CD4-positive, alpha-beta memory T cell (primary cell): ENCODE measurements at regions of chr17 and their contacts with region 1.

Region 1: GRCh38 chr17:35312790-35313711 is 60.4 kb downstream of the SLFN11 start:
- DNase-seq: peak; percentile 89 to 98 (median 90)
- H3K4me3 ChIP-seq: peak overlapping the region; percentile 7 to 60
- H3K4me3 Mint-ChIP-seq: peak overlapping the region; percentile 89 to 98 (median 94)
- H3K27ac ChIP-seq: peak overlapping the region; percentile 60
- H3K27ac Mint-ChIP-seq: peak overlapping the region; percentile 89 to 100 (median 98)
- H3K4me1 ChIP-seq: peaks cover 31% of the 10 kb centered on the region
- H3K4me1 Mint-ChIP-seq: peaks cover 42 to 72% (median 58%) of the 10 kb centered on the region in 4 donors
- H3K27me3 ChIP-seq: no peaks in the 10 kb centered on the region
- H3K27me3 Mint-ChIP-seq: no peaks in the 10 kb centered on the region

Region 2: GRCh38 chr17:35214631-35215273 is 98.3 kb before region 1 on chr17:
- CTCF ChIA-PET with region 1: interaction called, 18 read pairs
- POLR2A ChIA-PET with region 1: interaction called, 30 read pairs
- intact Hi-C with region 1: loop called (anchors 1 kb)
- DNase-seq: peak in 3 of 5 donors; percentile 57 to 65 (median 58)
- H3K4me3 ChIP-seq: peak overlapping the region; percentile 38 to 51
- H3K4me3 Mint-ChIP-seq: peak overlapping the region; percentile 16 to 85 (median 79)
- H3K27ac ChIP-seq: peak overlapping the region; percentile 60
- H3K27ac Mint-ChIP-seq: peak overlapping the region; percentile 87 to 97 (median 94)
- H3K4me1 ChIP-seq: peaks cover 93% of the 10 kb centered on the region
- H3K4me1 Mint-ChIP-seq: peaks cover 70 to 91% (median 79%) of the 10 kb centered on the region in 4 donors
- H3K27me3 ChIP-seq: no peaks in the 10 kb centered on the region
- H3K27me3 Mint-ChIP-seq: no peaks in the 10 kb centered on the region

Region 3: GRCh38 chr17:35229638-35230037 is 83.4 kb before region 1 on chr17:
- CTCF ChIA-PET with region 1: no interaction called
- POLR2A ChIA-PET with region 1: no interaction called
- intact Hi-C with region 1: no loop called
- DNase-seq: no peak
- H3K4me3 ChIP-seq: no peak overlapping the region
- H3K4me3 Mint-ChIP-seq: peak overlapping the region in 1 of 8 donors; percentile 51
- H3K27ac ChIP-seq: no peak overlapping the region
- H3K27ac Mint-ChIP-seq: peak overlapping the region in 1 of 7 donors; percentile 17
- H3K4me1 ChIP-seq: peaks cover 23% of the 10 kb centered on the region
- H3K4me1 Mint-ChIP-seq: peaks cover 25 to 58% (median 40%) of the 10 kb centered on the region in 4 donors
- H3K27me3 ChIP-seq: no peaks in the 10 kb centered on the region
- H3K27me3 Mint-ChIP-seq: no peaks in the 10 kb centered on the region

Region 4: GRCh38 chr17:35299129-35299528 is 13.9 kb before region 1 on chr17:
- CTCF ChIA-PET with region 1: interaction called, 10 read pairs
- POLR2A ChIA-PET with region 1: interaction called, 6 read pairs
- intact Hi-C with region 1: no loop called
- DNase-seq: no peak
- H3K4me3 ChIP-seq: no peak overlapping the region
- H3K4me3 Mint-ChIP-seq: peak overlapping the region in 1 of 8 donors; percentile 10
- H3K27ac ChIP-seq: no peak overlapping the region
- H3K27ac Mint-ChIP-seq: no peak overlapping the region
- H3K4me1 ChIP-seq: no peaks in the 10 kb centered on the region
- H3K4me1 Mint-ChIP-seq: peaks cover 0 to 9% (median 3%) of the 10 kb centered on the region in 4 donors
- H3K27me3 ChIP-seq: no peaks in the 10 kb centered on the region
- H3K27me3 Mint-ChIP-seq: no peaks in the 10 kb centered on the region

Region 5: GRCh38 chr17:35373534-35373983 is 60.5 kb after region 1 on chr17 and contains the start of gene SLFN11:
- CTCF ChIA-PET with region 1: interaction called, 29 read pairs
- POLR2A ChIA-PET with region 1: interaction called, 43 read pairs
- intact Hi-C with region 1: loop called (anchors 1 kb)
- DNase-seq: peak; percentile 83 to 91 (median 83)
- H3K4me3 ChIP-seq: peak within 1 kb of the TSS; percentile 54 to 85
- H3K4me3 Mint-ChIP-seq: peak within 1 kb of the TSS; percentile 96 to 100 (median 99)
- H3K27ac ChIP-seq: peak within 1 kb of the TSS; percentile 98
- H3K27ac Mint-ChIP-seq: peak within 1 kb of the TSS; percentile 99 to 100 (median 100)
- H3K4me1 ChIP-seq: peaks cover 45% of the 10 kb centered on the region
- H3K4me1 Mint-ChIP-seq: peaks cover 32 to 71% (median 50%) of the 10 kb centered on the region in 4 donors
- H3K27me3 ChIP-seq: no peaks in the 10 kb centered on the region
- H3K27me3 Mint-ChIP-seq: no peaks in the 10 kb centered on the region
- total RNA-seq, gene SLFN11: 72.4 to 74.2 TPM

Region 6: GRCh38 chr17:35467824-35468223 is 154.8 kb after region 1 on chr17:
- CTCF ChIA-PET with region 1: interaction called, 13 read pairs
- POLR2A ChIA-PET with region 1: interaction called, 10 read pairs
- intact Hi-C with region 1: no loop called
- DNase-seq: peak in 4 of 5 donors; percentile 28 to 52 (median 40)
- H3K4me3 ChIP-seq: no peak overlapping the region
- H3K4me3 Mint-ChIP-seq: peak overlapping the region in 7 of 8 donors; percentile 17 to 68 (median 57)
- H3K27ac ChIP-seq: no peak overlapping the region
- H3K27ac Mint-ChIP-seq: peak overlapping the region; percentile 65 to 92 (median 86)
- H3K4me1 ChIP-seq: peaks cover 34% of the 10 kb centered on the region
- H3K4me1 Mint-ChIP-seq: peaks cover 40 to 64% (median 50%) of the 10 kb centered on the region in 4 donors
- H3K27me3 ChIP-seq: no peaks in the 10 kb centered on the region
- H3K27me3 Mint-ChIP-seq: no peaks in the 10 kb centered on the region

Region 7: GRCh38 chr17:35540589-35541404 is 227.7 kb after region 1 on chr17:
- CTCF ChIA-PET with region 1: interaction called, 270 read pairs
- POLR2A ChIA-PET with region 1: interaction called, 316 read pairs
- intact Hi-C with region 1: loop called (anchors 1 kb)
- DNase-seq: peak in 4 of 5 donors; percentile 43 to 54 (median 50)
- H3K4me3 ChIP-seq: peak overlapping the region; percentile 60 to 79
- H3K4me3 Mint-ChIP-seq: peak overlapping the region; percentile 87 to 98 (median 92)
- H3K27ac ChIP-seq: peak overlapping the region; percentile 74
- H3K27ac Mint-ChIP-seq: peak overlapping the region; percentile 80 to 98 (median 95)
- H3K4me1 ChIP-seq: peaks cover 45% of the 10 kb centered on the region
- H3K4me1 Mint-ChIP-seq: peaks cover 32 to 62% (median 45%) of the 10 kb centered on the region in 4 donors
- H3K27me3 ChIP-seq: no peaks in the 10 kb centered on the region
- H3K27me3 Mint-ChIP-seq: no peaks in the 10 kb centered on the region